Heart left ventricle (tissue), 16 donors: ENCODE measurements at regions of chr6 and their contacts with region 1.

Region 1: DNA sequence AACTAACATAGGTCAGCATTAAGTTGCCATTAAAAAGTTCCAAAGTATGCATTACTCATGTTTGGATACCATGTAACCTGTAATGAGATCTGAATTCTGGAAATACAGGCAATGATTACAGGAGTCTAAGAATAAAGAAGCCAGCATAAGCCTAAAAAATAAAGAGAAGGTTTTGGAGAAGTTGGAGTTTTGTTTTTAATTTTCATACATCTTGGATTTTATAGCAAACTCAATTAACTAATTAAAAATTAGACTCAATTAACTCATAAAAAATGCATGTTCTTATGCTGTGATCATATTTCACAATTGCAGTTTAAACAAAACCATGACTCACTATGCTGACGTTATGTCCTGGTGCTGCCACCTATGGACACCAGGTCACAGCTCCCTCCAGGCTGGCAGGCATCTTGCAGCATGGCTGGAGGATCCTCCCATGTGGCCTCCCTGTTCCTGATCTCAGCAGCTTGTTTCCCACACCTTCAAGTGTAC is 648.8 kb upstream of the AGPAT4 start:
- DNase-seq: peak in 4 of 5 donors; percentile 15 to 70 (median 40)
- ATAC-seq: peak in 3 of 4 donors; percentile 86 to 95 (median 93)
- H3K4me3 ChIP-seq: no peak overlapping the region
- H3K27ac ChIP-seq: no peak overlapping the region
- H3K4me1 ChIP-seq: peaks cover 0 to 7% (median 0%) of the 10 kb centered on the region in 12 donors
- H3K27me3 ChIP-seq: no peaks in the 10 kb centered on the region
- CTCF ChIP-seq: peak; percentile 15 to 55 (median 39)
- POLR2A ChIP-seq: no peak

Region 2: DNA sequence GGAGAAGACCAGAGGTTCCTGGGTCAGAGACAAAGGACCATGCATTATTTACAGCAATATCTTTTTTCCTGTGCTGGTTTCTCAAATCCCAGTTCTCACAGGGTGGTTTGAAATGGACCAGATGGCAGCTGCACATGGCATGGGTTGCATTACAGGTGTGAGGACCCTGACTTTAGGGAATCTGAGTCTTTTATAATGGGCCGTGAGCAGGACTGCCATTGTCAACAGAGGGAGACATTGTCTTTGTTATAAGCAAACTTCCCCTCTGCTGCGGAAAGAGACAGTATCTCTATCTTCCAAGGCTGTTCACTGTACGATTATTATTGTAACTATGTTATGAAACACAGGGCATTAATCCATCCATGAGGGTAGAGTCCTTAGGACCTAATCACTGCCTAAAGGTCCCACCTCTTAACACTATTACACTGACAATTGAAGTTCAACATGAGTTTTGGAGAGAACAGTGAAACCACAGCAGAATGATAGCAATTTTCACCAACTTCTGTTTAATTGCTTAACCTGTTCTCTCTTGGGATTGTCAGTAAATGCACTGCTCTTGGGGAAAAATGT is 492.7 kb before region 1 on chr6:
- intact Hi-C with region 1: loop called in 1 of 10 experiments (anchors 10 kb)
- DNase-seq: no peak
- ATAC-seq: peak in 1 of 4 donors; percentile 10
- H3K4me3 ChIP-seq: no peak overlapping the region
- H3K27ac ChIP-seq: no peak overlapping the region
- H3K4me1 ChIP-seq: peaks cover 0 to 15% (median 6%) of the 10 kb centered on the region in 12 donors
- H3K27me3 ChIP-seq: no peaks in the 10 kb centered on the region
- CTCF ChIP-seq: peak in 4 of 12 donors; percentile 20 to 39 (median 30)
- POLR2A ChIP-seq: no peak